ENCODE measurements at regions of chr1 and their contacts with region 1.

Region 1: DNA sequence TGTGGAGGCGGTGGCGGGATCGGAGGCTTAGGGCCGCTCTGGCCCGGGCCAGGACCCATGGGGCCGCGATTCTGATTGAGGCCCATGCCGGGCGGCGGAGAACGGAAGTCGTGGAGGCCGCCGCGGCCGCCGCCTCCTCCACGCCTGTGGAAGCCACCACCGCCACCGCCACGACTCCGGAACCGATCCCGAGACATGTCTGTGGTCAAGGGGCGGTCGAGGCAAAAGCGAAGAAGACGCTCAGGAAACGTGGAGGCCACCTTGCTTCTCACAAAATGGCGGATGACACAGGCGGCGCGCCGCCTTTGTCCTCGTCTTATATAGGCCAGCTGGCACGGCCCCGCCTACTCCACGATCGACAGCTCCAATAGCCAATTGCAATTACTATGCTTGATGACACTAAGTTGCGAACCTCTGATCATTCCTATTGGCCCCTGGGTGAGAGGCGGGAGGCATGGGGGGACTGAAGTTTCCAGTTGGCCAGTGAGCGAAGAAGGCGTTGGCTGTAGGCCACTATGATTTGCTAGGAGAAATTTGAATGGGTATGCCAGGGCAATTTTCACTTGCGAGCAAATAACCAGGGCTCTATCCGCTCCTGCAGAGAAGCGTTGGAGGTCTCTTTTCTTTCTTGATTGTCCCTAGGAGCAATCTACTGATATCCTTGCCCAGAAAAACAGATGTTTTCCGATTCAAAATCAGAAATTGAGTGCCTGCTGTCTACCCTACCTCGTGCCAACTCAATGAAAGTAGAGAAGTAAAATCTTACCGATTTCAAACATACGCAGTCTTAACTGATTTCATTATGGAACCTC is at the start of gene SFPQ:
- DNase-seq: peak; percentile 96
- H3K4me3 Mint-ChIP-seq: peak within 1 kb of the TSS; percentile 91
- H3K27ac Mint-ChIP-seq: peak within 1 kb of the TSS; percentile 98
- H3K4me1 Mint-ChIP-seq: peaks cover 32% of the 10 kb centered on the region
- H3K27me3 Mint-ChIP-seq: peaks cover 4% of the 10 kb centered on the region
- total RNA-seq, gene SFPQ: 358 and 369 TPM in 2 replicates

Region 2: DNA sequence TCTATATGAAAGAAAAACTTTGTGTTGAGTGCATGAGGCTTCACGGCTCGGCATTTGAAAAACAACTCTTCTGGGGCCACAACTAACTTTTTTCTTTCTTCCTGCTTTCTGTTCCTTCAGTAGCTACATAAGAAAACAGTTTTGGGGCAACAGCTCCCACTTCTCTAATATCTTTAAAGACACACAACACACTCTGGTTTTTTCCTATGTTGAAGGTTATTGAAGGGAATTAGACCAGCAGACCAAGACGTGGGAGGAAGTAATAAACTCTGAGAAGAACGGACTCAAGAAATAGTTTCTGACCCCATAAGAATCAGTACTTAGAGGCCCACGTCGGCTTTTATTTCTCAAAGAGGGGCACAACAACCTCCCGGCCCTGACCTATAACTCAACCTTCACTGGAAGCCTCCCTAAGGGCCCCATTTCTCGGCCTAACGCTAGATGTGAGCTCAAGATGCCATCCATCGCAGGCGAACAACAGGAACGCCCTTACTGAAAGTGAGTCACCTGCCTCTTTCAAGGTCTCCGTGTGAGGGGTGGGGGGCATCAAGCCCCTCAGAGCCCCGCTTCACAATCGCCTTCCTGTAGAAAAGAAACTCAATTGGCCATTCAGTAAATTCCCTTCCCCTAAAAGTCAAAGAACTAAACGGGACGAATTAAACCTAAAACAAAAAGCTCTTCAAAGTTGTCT is 162.2 kb before region 1 on chr1:
- intact Hi-C with region 1: loop called (anchors 2 kb)
- DNase-seq: peak; percentile 21
- H3K4me3 Mint-ChIP-seq: peak overlapping the region; percentile 90
- H3K27ac Mint-ChIP-seq: peak overlapping the region; percentile 89
- H3K4me1 Mint-ChIP-seq: peaks cover 23% of the 10 kb centered on the region
- H3K27me3 Mint-ChIP-seq: peaks cover 1% of the 10 kb centered on the region

Region 3: DNA sequence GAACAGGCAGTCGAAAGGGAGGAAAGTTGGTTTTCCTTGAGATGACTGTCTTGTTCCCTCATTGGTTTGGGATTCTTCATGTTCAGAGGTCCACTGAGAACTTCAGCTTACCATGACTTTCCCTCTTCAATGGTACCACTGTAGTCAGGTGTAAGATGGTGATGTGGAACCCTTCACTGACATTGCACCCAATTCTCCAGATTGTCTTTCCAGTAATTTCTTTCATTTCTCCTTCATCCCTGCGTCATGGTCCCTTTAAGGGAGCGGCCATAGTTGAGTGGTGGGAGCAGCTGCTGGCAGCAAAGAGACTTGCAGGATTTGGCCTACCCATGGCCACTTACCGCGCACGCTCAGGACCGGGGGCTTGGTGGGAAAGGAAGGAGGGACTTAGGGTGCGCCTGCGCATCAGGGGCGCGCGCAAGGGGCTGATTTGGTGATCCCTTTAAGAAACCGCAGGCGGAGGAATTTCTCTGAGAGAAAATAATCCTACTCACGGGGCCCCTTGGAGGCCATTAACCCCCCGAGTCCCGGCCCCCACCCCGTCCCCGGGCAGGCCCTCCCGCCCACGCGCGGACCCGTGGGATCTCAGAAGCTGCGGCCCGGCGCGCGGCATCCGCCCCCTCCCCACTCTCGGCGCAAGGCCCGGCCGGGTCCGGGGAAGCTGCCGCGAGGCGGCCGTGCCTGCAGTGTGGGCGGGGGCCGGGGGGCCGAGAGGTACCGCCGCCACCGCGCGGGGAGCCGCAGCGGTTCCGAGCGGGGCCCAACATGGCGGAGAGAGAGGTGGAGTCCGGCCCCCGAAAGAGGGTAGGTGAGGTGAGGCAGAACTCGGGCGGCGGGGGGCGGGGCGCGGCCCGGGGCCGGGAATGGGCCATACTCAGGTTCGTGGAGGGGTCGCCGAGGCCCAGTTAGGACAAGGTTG is 75.5 kb after region 1 on chr1 and contains the start of gene ZMYM4:
- intact Hi-C with region 1: loop called (anchors 1 kb)
- DNase-seq: peak; percentile 87
- H3K4me3 Mint-ChIP-seq: peak within 1 kb of the TSS; percentile 81
- H3K27ac Mint-ChIP-seq: peak within 1 kb of the TSS; percentile 80
- H3K4me1 Mint-ChIP-seq: peaks cover 28% of the 10 kb centered on the region
- H3K27me3 Mint-ChIP-seq: peaks cover 7% of the 10 kb centered on the region
- total RNA-seq, gene ZMYM4: 31.9 and 35.1 TPM in 2 replicates

Region 4: GRCh38 chr1:35557292-35558063 is 364.4 kb after region 1 on chr1 and contains the starts of genes KIAA0319L and NCDN:
- intact Hi-C with region 1: loop called (anchors 2 kb)
- DNase-seq: peak; percentile 95
- H3K4me3 Mint-ChIP-seq: peak within 1 kb of the TSS; percentile 96
- H3K27ac Mint-ChIP-seq: peak within 1 kb of the TSS; percentile 96
- H3K4me1 Mint-ChIP-seq: peaks cover 40% of the 10 kb centered on the region
- H3K27me3 Mint-ChIP-seq: no peaks in the 10 kb centered on the region
- total RNA-seq, gene KIAA0319L: 40.9 and 46.5 TPM in 2 replicates
- total RNA-seq, gene NCDN: 31.8 and 32.6 TPM in 2 replicates

Region 5: DNA sequence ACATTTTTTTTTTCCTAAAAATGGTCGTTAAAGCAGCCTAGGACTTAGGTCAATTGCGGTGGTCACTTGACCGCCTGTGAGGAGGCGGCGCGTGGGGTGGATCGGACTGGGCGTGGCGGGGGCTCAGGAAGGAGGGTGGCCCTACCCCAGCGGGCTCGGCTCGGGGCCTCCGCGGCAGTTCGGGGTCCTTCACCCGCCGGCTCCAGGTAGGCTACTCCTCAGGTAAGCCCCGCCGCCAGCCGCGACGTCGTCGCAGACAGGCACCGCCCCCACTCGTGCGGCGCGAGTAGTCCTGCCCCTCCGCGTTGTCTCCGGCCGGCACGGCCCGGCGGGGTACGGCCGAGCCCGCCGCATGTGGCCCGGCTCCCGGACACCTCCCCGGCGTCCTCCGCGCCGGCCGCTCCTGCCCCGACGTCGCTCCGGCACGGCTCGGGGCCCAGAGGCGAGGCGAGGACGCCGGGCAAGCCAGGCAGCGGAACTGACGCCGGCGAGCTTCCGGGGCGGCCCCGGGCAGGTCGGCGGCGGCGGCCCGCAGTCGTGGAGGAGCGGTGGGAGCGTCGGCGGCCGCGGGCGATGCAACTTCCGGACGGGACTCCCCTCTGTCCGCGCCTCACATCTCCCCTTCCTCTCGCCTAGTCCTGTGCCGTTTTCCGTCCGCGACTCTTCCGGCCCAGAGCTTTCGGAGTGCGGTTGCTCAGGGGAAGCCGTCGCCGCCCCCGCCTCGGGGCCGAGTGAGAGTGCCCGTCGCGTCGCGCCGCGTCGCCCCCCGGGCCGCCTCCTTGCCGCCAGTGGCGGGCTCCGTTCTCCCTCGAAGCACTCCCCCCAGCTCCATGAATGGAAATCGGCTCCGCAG is 737.8 kb after region 1 on chr1 and contains the start of gene AGO3:
- intact Hi-C with region 1: loop called (anchors 2 kb)
- DNase-seq: peak; percentile 86
- H3K4me3 Mint-ChIP-seq: peak within 1 kb of the TSS; percentile 90
- H3K27ac Mint-ChIP-seq: peak within 1 kb of the TSS; percentile 96
- H3K4me1 Mint-ChIP-seq: peaks cover 27% of the 10 kb centered on the region
- H3K27me3 Mint-ChIP-seq: no peaks in the 10 kb centered on the region
- total RNA-seq, gene AGO3: 21.2 and 26.7 TPM in 2 replicates